Activated B cell treated with CpG ODN at 0.5 μM for 24 hours (primary cell): ENCODE measurements at regions of chr16 and their contacts with region 1.

Region 1: DNA sequence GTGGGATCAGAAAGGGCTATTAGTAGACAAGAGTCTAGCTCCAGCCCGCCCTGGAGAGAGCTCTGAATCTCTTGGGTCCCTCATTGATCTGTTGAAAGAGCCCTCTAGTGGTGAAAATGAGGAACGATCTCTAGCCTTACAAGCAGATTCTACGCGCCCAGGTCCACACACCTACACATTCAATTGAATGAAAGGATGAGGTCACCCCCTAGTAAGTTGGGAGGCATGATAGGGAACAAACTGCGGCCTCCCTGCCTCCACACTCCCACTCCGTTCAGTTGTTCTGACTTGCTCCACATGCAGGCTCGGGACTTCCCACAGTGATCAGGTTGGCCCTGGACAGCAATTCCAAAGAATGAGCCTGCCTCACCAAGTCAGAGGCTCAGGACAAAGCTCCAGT is 2.9 kb upstream of the CACNG3 start:
- DNase-seq: no peak
- ATAC-seq: peak; percentile 66
- H3K4me3 Mint-ChIP-seq: no peak overlapping the region
- H3K27ac Mint-ChIP-seq: no peak overlapping the region
- H3K4me1 Mint-ChIP-seq: peaks cover 7% of the 10 kb centered on the region
- H3K27me3 Mint-ChIP-seq: peaks cover 54% of the 10 kb centered on the region
- CTCF ChIP-seq: no peak

Region 2: GRCh38 chr16:23729503-23730424 is 523.4 kb before region 1 on chr16:
- CTCF ChIA-PET with region 1: interaction called, 10 read pairs
- POLR2A ChIA-PET with region 1: no interaction called
- intact Hi-C with region 1: no loop called
- DNase-seq: no peak
- ATAC-seq: no peak
- H3K4me3 Mint-ChIP-seq: no peak overlapping the region
- H3K27ac Mint-ChIP-seq: no peak overlapping the region
- H3K4me1 Mint-ChIP-seq: peaks cover 3% of the 10 kb centered on the region
- H3K27me3 Mint-ChIP-seq: peaks cover 11% of the 10 kb centered on the region
- CTCF ChIP-seq: no peak

Region 3: DNA sequence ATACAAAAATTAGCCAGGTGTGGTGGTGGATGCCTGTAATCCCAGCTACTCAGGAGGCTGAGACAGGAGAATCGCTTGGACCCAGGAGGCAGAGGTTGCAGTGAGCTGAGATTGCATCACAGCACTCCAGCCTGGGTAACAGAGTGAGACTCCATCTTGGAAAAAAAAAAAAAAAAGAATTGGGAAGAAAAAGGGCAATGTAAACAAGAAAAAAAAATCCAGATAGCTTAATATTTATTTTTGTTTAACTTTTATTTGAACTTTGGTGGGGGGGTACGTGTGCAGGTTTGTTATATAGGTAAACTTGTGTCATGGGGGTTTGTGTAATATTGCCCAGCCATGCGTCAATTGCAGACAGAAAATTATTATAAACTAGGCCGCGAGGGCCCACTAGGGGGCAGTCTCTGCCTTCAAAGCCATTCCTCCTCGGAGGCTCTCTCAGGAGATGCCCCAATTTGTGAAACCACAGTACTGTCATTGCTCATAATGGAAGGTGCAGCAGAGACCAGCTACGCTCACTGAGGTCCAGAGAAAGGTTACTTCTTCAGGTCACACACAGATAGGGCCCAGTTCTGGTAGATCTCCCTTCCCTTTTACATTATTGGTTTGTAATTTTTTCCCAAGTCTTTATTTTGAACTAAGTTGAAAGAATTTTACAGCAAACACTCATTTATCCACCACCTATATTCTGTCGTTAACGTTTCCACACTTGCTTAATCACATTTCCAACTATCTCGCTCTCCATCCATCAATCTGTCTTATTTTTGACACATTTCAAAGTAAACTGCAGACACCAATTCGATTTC is 211.2 kb before region 1 on chr16:
- CTCF ChIA-PET with region 1: interaction called, 74 read pairs
- POLR2A ChIA-PET with region 1: no interaction called
- intact Hi-C with region 1: loop called (anchors 1 kb)
- DNase-seq: peak; percentile 64
- ATAC-seq: peak; percentile 93
- H3K4me3 Mint-ChIP-seq: no peak overlapping the region
- H3K27ac Mint-ChIP-seq: peak overlapping the region; percentile 8
- H3K4me1 Mint-ChIP-seq: peaks cover 8% of the 10 kb centered on the region
- H3K27me3 Mint-ChIP-seq: no peaks in the 10 kb centered on the region
- CTCF ChIP-seq: peak; percentile 57

Region 4: DNA sequence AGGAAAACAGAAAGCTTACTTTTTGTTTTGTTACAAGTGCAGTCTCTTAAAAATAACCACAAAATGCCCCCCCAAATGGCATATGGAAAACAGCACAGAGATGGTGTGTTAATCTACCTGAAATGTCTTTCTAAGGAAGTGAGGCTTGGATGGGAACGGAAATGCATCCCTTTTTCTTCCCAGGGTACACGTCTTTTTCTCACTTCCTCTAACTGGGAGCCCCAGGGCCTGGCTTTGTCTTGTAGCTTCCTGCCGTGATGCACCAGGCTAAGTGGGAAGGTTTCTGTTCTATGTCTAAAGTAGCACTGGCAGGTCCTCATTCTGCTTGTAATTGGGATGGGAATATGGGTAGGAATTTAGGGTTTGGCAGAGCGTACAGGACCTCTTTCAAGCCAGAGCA is 49.5 kb before region 1 on chr16:
- CTCF ChIA-PET with region 1: interaction called, 3 read pairs
- POLR2A ChIA-PET with region 1: no interaction called
- intact Hi-C with region 1: loop called (anchors 5 kb)
- DNase-seq: no peak
- ATAC-seq: no peak
- H3K4me3 Mint-ChIP-seq: no peak overlapping the region
- H3K27ac Mint-ChIP-seq: peak overlapping the region; percentile 63
- H3K4me1 Mint-ChIP-seq: peaks cover 21% of the 10 kb centered on the region
- H3K27me3 Mint-ChIP-seq: no peaks in the 10 kb centered on the region
- CTCF ChIP-seq: no peak